Activated B cell treated with CpG ODN at 0.5 μM for 24 hours (primary cell): ENCODE measurements at regions of chr11 and their contacts with region 1.

Region 1: DNA sequence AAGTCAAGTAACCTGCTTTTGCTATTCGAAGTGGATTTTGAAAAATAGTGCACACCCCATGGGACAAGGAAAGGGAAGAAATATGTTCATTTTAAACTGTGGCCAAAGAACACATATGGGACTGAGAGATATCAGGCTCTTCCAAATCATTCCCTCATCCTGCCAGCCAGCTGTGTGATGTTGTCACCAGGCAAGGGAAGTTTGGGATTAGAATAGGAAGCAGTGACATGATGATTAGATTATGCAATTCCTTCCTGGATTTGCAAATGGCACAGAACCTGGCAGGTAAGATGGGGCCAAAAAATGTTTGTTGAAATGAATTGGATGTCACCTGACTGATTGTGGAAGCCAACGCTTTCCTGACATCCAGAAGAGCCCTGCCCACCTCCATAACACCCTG is 4.9 kb upstream of the SCN3B start:
- DNase-seq: no peak
- ATAC-seq: no peak
- H3K4me3 Mint-ChIP-seq: no peak overlapping the region
- H3K27ac Mint-ChIP-seq: no peak overlapping the region
- H3K4me1 Mint-ChIP-seq: peaks cover 28% of the 10 kb centered on the region
- H3K27me3 Mint-ChIP-seq: peaks cover 13% of the 10 kb centered on the region
- CTCF ChIP-seq: no peak

Region 2: DNA sequence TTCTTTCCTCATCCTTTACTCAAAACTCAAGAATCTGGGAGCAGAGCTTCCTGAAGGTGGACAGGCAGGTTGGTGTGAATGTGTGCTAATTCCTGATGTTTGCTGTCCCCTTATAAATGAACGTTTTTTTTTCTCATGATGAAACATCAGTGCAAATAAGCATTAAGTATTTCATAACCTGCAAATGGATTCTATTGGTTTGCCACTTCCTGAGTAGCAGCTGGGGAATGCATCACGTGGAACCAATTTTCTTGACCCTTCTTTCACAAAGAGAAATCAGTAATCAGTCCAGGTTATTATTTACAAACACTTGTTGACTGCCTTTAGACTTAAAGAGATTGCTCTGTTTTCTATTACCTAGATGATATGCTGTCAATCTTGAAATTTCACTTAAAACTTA is 35.2 kb after region 1 on chr11:
- CTCF ChIA-PET with region 1: no interaction called
- POLR2A ChIA-PET with region 1: interaction called, 11 read pairs
- intact Hi-C with region 1: no loop called
- DNase-seq: no peak
- ATAC-seq: no peak
- H3K4me3 Mint-ChIP-seq: no peak overlapping the region
- H3K27ac Mint-ChIP-seq: no peak overlapping the region
- H3K4me1 Mint-ChIP-seq: peaks cover 2% of the 10 kb centered on the region
- H3K27me3 Mint-ChIP-seq: peaks cover 15% of the 10 kb centered on the region
- CTCF ChIP-seq: no peak